Transverse colon (tissue), 4 donors: ENCODE measurements at regions of chrX and their contacts with region 1.

Region 1: DNA sequence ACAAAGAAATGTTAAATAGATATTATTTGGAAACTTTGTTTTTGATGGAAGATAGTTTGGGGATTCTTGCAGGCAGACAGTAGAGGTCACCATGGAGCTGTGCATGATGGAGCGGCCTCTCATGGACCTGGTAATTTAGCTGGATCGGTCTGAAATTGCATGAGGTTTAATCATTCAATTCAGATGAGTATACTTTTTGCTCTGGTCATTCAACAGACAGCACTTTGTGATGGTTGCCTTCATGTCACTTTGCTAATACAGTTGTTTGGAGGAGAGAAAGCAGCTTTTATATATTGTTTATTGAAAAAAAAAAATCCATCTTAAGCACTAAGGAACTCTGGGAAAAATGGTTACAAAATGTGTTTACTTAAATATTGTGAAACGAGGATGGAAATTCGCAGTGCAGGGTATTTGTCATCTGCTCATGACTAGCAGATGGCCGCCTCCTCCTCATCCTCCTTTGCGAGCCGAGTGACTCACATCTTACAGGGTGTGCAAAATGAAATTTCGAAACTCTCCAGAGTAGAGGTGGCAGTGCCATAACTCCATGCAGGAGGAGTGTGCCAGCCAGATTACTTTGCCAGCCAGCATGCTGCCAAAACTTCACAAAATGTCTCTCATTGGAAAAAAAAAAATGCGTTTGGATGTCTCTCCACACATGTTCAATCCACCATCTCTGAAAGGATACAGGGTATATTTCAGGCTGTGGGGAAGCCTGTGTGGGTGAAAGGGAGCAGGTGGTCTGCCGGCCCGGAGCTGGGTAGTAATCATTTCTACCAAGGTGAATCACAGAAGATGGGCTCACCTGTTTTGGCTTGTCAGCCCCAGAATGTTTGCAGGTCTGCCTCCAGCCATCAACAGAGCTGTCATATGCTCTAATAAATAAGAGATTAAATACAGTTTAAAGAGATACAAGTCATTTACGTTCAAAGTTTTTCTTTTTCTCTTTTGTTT is 314.9 kb upstream of the DIPK2B start:
- DNase-seq: peak; percentile 43
- H3K4me3 ChIP-seq: no peak overlapping the region
- H3K27ac ChIP-seq: peak overlapping the region; percentile 15 to 50 (median 33)
- H3K4me1 ChIP-seq: peaks cover 0 to 2% (median 0%) of the 10 kb centered on the region in 4 donors
- H3K27me3 ChIP-seq: no peaks in the 10 kb centered on the region
- CTCF ChIP-seq: peak; percentile 29 to 50 (median 41)
- EP300 ChIP-seq: no peak
- POLR2A ChIP-seq: no peak

Region 2: GRCh38 chrX:45769761-45770582 is 254.4 kb after region 1 on chrX:
- in situ Hi-C with region 1: loop called in 2 of 4 experiments (anchors 25 kb)
- intact Hi-C with region 1: no loop called
- DNase-seq: peak; percentile 71
- H3K4me3 ChIP-seq: peak overlapping the region; percentile 5 to 55 (median 30)
- H3K27ac ChIP-seq: peak overlapping the region; percentile 79 to 88 (median 86)
- H3K4me1 ChIP-seq: peaks cover 0 to 15% (median 0%) of the 10 kb centered on the region in 4 donors
- H3K27me3 ChIP-seq: no peaks in the 10 kb centered on the region
- CTCF ChIP-seq: no peak
- EP300 ChIP-seq: no peak
- POLR2A ChIP-seq: peak; percentile 78

Region 3: DNA sequence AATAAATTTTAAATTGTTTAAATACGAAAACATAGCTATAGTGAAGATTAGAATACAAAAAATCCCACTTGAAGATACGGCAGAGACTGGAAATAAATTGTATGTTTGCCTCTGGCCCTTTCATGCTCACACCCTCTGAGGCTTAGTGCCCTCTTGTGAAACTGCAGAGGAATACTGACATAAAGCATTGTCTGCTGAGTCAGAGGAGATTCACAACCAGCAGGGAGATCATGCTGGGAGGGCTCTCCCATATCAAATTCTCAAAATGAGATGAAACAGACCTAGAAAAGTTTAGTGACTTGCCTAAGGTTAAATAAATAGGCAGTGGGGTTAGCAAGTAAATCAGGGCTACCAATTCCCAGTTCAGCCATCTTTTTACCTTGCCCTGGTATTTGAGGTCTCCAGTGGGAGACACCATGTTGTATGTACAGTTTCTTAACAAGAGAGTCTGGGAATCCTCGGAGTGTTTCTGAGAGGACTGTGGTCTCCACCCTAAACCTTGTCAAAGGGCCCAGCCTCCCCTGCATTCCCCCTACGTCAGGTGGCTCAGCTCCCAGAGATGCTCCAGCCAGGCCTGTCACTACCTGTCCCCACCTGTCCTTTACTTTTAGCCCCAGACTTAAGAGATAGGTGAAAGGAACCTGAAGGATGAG is 266.5 kb after region 1 on chrX:
- in situ Hi-C with region 1: loop called in 1 of 4 experiments (anchors 25 kb)
- intact Hi-C with region 1: no loop called
- DNase-seq: no peak
- H3K4me3 ChIP-seq: no peak overlapping the region
- H3K27ac ChIP-seq: no peak overlapping the region
- H3K4me1 ChIP-seq: no peaks in the 10 kb centered on the region
- H3K27me3 ChIP-seq: no peaks in the 10 kb centered on the region
- CTCF ChIP-seq: peak in 3 of 5 experiments; percentile 10 to 18 (median 14)
- EP300 ChIP-seq: no peak
- POLR2A ChIP-seq: no peak

Region 4: DNA sequence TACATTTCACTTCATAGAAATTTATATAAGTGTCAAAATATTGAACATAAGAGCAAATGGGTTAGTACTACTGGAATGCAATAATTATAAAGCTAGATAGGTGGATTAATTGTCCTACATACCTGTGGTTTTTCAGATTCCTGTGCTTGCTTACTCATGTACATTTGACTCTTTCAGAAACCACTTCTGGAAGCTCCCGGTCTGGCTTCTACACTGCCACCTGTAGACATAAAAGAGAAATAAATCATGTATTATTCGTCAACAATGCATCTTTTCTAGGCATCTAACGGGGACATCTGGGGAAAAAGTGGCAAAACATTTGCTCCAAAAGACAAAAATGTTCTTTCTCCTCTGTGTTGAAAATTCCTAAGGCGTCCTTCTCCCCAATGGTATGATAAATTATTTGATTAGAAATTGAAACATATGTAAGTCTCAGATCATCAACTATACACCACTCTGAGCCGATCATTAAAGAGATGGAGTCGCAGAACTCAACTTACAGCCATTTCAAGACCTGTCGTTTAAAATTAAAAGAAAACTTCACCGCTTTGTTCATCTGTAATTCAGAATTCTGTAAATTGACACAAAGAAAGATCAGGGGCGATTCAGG is 333.8 kb after region 1 on chrX:
- in situ Hi-C with region 1: loop called in 1 of 4 experiments (anchors 10 kb)
- intact Hi-C with region 1: no loop called
- DNase-seq: no peak
- H3K4me3 ChIP-seq: no peak overlapping the region
- H3K27ac ChIP-seq: no peak overlapping the region
- H3K4me1 ChIP-seq: no peaks in the 10 kb centered on the region
- H3K27me3 ChIP-seq: no peaks in the 10 kb centered on the region
- CTCF ChIP-seq: peak in 2 of 5 experiments; percentile 4 to 7
- EP300 ChIP-seq: no peak
- POLR2A ChIP-seq: no peak

Region 5: DNA sequence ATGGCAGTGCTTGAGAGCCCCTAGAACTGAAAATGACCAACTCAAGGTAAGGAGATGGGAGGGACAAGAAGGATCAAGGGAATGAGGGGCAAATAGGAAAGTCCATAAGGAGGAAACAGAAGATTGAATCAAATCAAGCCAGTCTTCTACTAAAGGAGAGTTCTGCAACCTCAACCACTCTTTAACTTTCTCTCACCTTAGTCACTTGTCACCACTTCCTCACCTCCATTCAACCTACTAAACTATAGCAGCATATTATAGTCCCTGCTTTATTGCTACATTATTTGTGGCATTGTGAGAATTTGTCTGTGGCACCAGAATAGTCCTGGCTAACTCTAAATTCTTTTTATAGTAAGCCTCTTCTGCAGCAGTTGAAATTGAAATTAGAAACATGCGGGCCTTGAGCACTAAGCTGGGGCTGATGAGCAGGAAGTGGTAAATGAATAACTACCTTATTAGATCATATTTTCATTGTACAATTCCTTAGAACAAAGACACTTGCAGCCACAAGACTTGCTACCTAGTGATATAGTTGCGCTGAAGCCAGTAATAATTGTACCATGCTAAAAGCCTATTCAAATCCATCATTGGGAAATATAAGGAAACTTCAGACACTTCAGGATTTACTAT is 692.8 kb after region 1 on chrX:
- in situ Hi-C with region 1: no loop called
- intact Hi-C with region 1: no loop called
- DNase-seq: no peak
- H3K4me3 ChIP-seq: no peak overlapping the region
- H3K27ac ChIP-seq: no peak overlapping the region
- H3K4me1 ChIP-seq: no peaks in the 10 kb centered on the region
- H3K27me3 ChIP-seq: no peaks in the 10 kb centered on the region
- CTCF ChIP-seq: no peak
- EP300 ChIP-seq: no peak
- POLR2A ChIP-seq: no peak

Region 6: DNA sequence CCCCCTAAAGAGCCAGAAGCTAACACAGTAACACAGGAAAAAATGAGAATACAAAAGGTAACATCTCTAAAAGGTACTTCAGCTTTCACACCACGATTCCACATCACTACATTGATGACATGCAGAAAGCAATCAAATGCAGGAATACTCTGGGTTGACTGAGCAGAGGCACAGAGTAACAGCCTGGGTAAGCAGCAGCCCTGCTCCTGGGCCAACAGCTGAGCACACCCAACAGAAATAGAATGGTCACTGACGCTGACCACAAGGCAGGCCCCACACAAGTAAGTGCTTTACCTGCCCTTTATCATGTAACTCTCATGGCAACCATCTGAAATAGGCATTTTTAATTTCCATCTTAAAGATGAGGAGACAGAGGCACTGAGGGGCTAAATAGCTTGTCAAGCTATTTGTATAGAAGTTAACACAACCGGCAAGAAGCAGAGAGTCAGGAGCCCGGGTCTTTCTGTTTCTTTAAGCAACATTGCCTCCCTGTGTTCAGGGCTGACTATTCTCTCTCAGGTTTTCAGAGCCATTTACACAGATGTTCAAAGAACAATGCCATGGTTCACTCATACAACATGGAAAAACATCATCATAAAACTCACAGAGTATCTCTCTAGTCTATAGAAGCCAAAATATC is 860.8 kb after region 1 on chrX:
- in situ Hi-C with region 1: loop called in 1 of 4 experiments (anchors 25 kb)
- intact Hi-C with region 1: no loop called
- DNase-seq: peak; percentile 13
- H3K4me3 ChIP-seq: no peak overlapping the region
- H3K27ac ChIP-seq: no peak overlapping the region
- H3K4me1 ChIP-seq: no peaks in the 10 kb centered on the region
- H3K27me3 ChIP-seq: no peaks in the 10 kb centered on the region
- CTCF ChIP-seq: peak in 3 of 5 experiments; percentile 11 to 32 (median 12)
- EP300 ChIP-seq: no peak
- POLR2A ChIP-seq: no peak